CD4-positive, alpha-beta T cell (primary cell): ENCODE measurements at regions of chr6 and their contacts with region 1.

Region 1: DNA sequence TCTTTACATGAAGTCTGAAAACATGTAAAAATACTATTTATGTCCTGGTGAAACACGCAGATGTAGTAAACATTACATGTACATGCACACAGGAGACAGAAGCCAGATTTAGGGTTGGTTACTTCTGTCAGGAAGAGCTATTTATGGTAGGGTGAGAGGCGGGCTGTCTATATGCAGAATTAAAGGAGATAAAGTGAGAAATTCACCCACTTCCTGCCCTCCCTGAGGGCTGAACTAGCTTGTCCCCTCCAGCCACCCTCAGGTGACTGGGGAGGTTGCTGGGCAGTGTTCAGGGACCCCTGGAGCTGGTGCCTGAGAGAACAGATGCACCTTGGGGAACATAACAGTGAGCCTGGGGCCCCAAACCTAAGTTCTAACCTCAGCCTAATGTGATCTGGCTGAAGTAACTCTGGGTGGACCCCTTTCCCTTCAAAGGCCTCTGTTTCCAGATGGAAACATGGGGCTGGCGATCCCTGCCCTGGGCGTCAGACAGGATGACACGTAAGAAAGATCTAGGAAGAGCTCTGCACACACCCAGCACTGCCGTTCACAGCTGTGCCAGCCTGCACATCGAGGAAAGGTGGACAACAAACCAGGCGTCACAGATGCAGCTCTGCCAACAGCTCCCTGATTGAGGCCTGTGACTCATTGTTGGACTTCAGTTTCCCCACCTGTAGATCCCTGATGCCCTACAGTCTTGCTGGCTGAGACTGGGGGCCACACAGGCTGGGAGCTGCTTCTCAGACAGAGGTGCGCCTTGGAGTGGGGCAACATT is 1.3 kb downstream of the PI16 start:
- DNase-seq: peak in 3 of 14 experiments; percentile 25 to 33 (median 29)
- ATAC-seq: peak; percentile 62
- H3K4me3 ChIP-seq: peak overlapping the region; percentile 64
- H3K4me3 Mint-ChIP-seq: peak overlapping the region; percentile 85
- H3K27ac ChIP-seq: no peak overlapping the region
- H3K27ac Mint-ChIP-seq: peak overlapping the region; percentile 83
- H3K4me1 ChIP-seq: peaks cover 45% of the 10 kb centered on the region
- H3K4me1 Mint-ChIP-seq: peaks cover 52% of the 10 kb centered on the region
- H3K27me3 ChIP-seq: no peaks in the 10 kb centered on the region
- H3K27me3 Mint-ChIP-seq: no peaks in the 10 kb centered on the region
- CTCF ChIP-seq: no peak

Region 2: GRCh38 chr6:36874443-36875249 is 81.2 kb before region 1 on chr6 and contains the start of gene PPIL1:
- CTCF ChIA-PET with region 1: no interaction called
- POLR2A ChIA-PET with region 1: interaction called, 13 read pairs
- intact Hi-C with region 1: no loop called
- DNase-seq: peak; percentile 71 to 94 (median 82)
- ATAC-seq: peak; percentile 91
- H3K4me3 ChIP-seq: peak within 1 kb of the TSS; percentile 69
- H3K4me3 Mint-ChIP-seq: peak within 1 kb of the TSS; percentile 95
- H3K27ac ChIP-seq: peak within 1 kb of the TSS; percentile 80 to 82
- H3K27ac Mint-ChIP-seq: peak within 1 kb of the TSS; percentile 95
- H3K4me1 ChIP-seq: peaks cover 14% of the 10 kb centered on the region
- H3K4me1 Mint-ChIP-seq: peaks cover 45% of the 10 kb centered on the region
- H3K27me3 ChIP-seq: peaks cover 0 to 5% of the 10 kb centered on the region in 2 experiments
- H3K27me3 Mint-ChIP-seq: peaks cover 17% of the 10 kb centered on the region
- CTCF ChIP-seq: no peak
- total RNA-seq, gene PPIL1: 1.8 to 2.2 TPM

Region 3: DNA sequence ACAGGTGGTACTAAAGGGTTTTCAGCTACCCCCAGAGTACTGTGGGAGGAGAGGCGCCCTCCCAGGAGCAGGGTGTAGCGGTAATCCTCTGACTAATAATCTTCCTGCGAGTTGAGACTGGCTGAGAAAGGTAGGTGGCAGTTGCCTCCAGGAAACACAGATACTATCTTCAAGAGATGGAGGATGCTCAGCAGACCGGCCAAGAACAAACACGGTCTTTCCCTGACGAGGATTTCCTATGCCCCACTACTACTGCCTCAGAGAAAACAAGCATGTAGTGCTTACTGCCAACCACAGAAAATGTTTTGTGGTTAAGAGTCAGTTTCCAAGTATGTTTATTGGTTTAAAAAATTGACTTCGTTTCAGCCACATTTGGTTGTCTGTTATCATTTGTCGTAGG is 43.3 kb before region 1 on chr6:
- CTCF ChIA-PET with region 1: no interaction called
- POLR2A ChIA-PET with region 1: interaction called, 4 read pairs
- intact Hi-C with region 1: loop called (anchors 5 kb)
- DNase-seq: peak; percentile 19 to 89 (median 49)
- ATAC-seq: peak; percentile 92
- H3K4me3 ChIP-seq: peak overlapping the region; percentile 23
- H3K4me3 Mint-ChIP-seq: peak overlapping the region; percentile 64
- H3K27ac ChIP-seq: peak overlapping the region; percentile 32 to 50
- H3K27ac Mint-ChIP-seq: peak overlapping the region; percentile 82
- H3K4me1 ChIP-seq: peaks cover 38% of the 10 kb centered on the region
- H3K4me1 Mint-ChIP-seq: peaks cover 36% of the 10 kb centered on the region
- H3K27me3 ChIP-seq: no peaks in the 10 kb centered on the region
- H3K27me3 Mint-ChIP-seq: no peaks in the 10 kb centered on the region
- CTCF ChIP-seq: no peak

Region 4: GRCh38 chr6:36917541-36918193 is 38.2 kb before region 1 on chr6:
- CTCF ChIA-PET with region 1: no interaction called
- POLR2A ChIA-PET with region 1: no interaction called
- intact Hi-C with region 1: loop called (anchors 5 kb)
- DNase-seq: no peak
- ATAC-seq: no peak
- H3K4me3 ChIP-seq: no peak overlapping the region
- H3K4me3 Mint-ChIP-seq: no peak overlapping the region
- H3K27ac ChIP-seq: no peak overlapping the region
- H3K27ac Mint-ChIP-seq: no peak overlapping the region
- H3K4me1 ChIP-seq: peaks cover 21% of the 10 kb centered on the region
- H3K4me1 Mint-ChIP-seq: peaks cover 18% of the 10 kb centered on the region
- H3K27me3 ChIP-seq: no peaks in the 10 kb centered on the region
- H3K27me3 Mint-ChIP-seq: no peaks in the 10 kb centered on the region
- CTCF ChIP-seq: no peak

Region 5: DNA sequence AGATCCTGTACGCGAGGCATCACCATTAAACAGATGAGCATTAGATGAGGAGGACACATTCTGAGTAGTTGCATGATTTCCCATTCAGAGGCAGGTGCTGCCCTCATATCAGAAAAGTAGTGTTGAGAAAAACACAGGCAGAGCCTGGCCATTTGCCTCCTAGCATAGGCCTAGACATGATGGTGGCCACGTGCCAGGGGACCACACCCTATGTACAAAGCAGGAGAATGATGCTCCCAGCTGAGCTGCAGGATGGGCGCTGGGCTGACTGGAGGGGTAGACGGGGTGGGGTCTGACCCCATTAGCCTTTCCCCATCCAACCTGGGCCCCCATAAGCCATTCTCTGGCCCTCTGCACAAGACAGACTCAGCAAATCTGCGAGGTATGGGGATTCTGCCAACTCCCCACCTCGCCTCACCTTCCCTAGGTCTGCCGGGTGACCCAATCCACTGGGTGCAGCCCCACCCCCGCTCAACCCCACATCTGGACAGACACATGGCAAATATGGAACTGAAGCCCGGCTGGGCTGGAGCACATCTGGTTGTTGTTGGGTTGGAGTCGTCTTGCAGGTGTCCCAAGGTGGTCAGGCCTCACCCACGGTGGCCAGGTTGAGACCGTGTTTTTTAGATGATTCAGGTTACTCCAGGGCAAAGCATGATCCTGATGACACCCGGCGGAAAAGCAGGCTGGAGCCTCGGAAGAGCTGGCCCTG is 12.6 kb after region 1 on chr6:
- CTCF ChIA-PET with region 1: interaction called, 3 read pairs
- POLR2A ChIA-PET with region 1: interaction called, 19 read pairs
- intact Hi-C with region 1: no loop called
- DNase-seq: no peak
- ATAC-seq: no peak
- H3K4me3 ChIP-seq: no peak overlapping the region
- H3K4me3 Mint-ChIP-seq: no peak overlapping the region
- H3K27ac ChIP-seq: no peak overlapping the region
- H3K27ac Mint-ChIP-seq: no peak overlapping the region
- H3K4me1 ChIP-seq: peaks cover 18% of the 10 kb centered on the region
- H3K4me1 Mint-ChIP-seq: peaks cover 29% of the 10 kb centered on the region
- H3K27me3 ChIP-seq: no peaks in the 10 kb centered on the region
- H3K27me3 Mint-ChIP-seq: no peaks in the 10 kb centered on the region
- CTCF ChIP-seq: no peak

Region 6: DNA sequence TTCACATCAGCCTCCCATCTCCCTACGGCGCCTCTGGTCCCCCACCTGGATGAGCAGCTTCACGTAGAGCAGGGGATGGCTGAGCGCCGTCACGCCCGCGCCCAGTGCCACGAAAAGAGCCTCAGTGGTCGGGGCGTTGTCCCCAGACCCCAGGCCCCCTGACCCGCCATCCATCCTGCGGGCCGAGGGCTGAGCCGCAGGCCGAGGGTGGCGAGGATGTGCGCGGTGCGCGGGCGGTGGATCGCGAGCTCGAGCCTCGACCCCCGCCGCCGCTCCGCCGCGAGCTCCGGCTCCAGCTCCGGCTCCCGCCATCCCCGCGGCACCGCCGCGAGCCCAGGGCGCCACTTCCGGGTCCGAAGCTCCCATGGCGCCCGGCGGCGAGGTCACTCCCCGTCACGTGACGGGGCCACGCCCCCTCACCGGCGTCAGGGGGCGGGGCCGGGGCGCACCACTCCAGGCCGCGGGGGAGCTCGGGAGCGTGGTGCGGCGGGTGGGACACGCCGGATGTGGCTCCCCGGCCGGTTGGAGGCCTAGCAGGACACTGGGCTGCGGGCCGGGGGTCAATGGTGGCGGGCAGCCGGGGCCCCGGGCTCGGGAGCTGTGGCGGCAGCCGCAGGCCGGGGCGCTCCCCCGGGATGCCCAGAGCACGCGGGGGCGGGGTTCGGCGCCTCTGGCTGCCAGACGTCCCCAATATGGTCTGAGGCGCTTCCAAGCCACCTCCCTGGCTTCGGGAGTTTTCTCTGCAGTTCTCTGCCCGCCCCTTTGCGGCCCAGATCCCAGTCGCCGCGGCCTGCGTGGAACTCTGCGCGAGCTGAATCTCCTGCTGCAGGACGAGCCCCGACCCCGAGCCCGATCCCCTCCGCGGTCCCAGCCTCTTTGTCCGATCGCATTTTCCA is 30.2 kb after region 1 on chr6 and contains the start of gene MTCH1:
- CTCF ChIA-PET with region 1: no interaction called
- POLR2A ChIA-PET with region 1: interaction called, 26 read pairs
- intact Hi-C with region 1: no loop called
- DNase-seq: peak; percentile 73 to 96 (median 86)
- ATAC-seq: peak; percentile 85
- H3K4me3 ChIP-seq: peak within 1 kb of the TSS; percentile 90
- H3K4me3 Mint-ChIP-seq: peak within 1 kb of the TSS; percentile 99
- H3K27ac ChIP-seq: peak within 1 kb of the TSS; percentile 61 to 81
- H3K27ac Mint-ChIP-seq: no peak within 1 kb of the TSS
- H3K4me1 ChIP-seq: peaks cover 49% of the 10 kb centered on the region
- H3K4me1 Mint-ChIP-seq: peaks cover 23% of the 10 kb centered on the region
- H3K27me3 ChIP-seq: no peaks in the 10 kb centered on the region
- H3K27me3 Mint-ChIP-seq: no peaks in the 10 kb centered on the region
- CTCF ChIP-seq: no peak
- total RNA-seq, gene MTCH1: 231 to 239 TPM

Region 7: GRCh38 chr6:37473397-37474095 is 517.7 kb after region 1 on chr6:
- CTCF ChIA-PET with region 1: no interaction called
- POLR2A ChIA-PET with region 1: no interaction called
- intact Hi-C with region 1: no loop called
- DNase-seq: no peak
- ATAC-seq: no peak
- H3K4me3 ChIP-seq: no peak overlapping the region
- H3K4me3 Mint-ChIP-seq: no peak overlapping the region
- H3K27ac ChIP-seq: no peak overlapping the region
- H3K27ac Mint-ChIP-seq: no peak overlapping the region
- H3K4me1 ChIP-seq: no peaks in the 10 kb centered on the region
- H3K4me1 Mint-ChIP-seq: no peaks in the 10 kb centered on the region
- H3K27me3 ChIP-seq: no peaks in the 10 kb centered on the region
- H3K27me3 Mint-ChIP-seq: no peaks in the 10 kb centered on the region
- CTCF ChIP-seq: no peak